Activated CD8-positive, alpha-beta memory T cell treated with anti-CD3 and anti-CD28 coated beads, Interleukin-2, amount 10 ng/mL, durations not matched to agents 7 days and 5 days (primary cell): ENCODE measurements at regions of chr1 and their contacts with region 1.

Region 1: DNA sequence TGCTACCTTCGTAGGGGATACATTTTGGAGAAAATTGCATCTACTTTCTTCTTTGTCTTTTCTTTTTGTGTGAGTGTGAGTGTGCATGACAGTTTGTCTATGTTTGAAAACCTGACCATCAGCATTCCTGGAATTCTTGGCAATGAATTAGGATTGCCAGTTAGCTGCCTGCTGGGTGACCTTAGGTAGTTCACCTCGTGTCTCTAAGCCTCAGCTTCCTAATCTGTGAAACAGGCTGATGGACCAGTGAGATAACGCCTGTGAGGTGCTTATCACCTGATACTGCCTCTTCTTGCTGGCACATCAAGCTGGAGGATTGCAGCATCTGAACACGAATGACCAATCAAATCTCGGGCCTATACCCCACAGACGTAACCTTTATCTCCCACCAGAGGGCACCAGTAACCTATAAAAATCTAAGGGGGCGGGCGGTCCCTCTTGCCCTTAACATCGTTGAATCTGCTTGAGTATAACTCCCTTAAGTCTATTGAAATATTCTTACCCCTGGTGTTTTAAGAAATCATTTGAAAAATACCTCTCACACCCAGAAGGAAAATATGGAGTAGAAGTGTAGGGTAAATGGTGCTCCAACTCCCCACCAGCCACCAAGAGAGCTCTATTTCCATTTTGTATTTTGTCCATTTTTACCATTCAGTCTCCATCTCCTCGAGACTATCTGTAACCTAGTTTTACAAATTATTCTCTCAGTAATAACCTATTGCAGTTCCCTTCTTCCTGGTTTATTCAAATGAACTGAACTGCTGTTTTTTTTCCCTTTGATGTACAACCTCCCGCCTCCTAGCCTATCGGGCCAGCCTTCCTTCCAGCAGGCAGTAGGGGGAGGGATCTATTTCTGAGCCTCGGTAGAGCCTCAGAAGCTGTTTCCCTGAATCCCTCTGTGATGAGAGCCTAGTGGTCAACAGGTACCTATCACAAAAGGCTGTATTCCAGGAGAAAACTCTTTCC is 49.7 kb downstream of the MDM4 start:
- DNase-seq: peak; percentile 80
- ATAC-seq: peak; percentile 86
- H3K4me3 Mint-ChIP-seq: no peak overlapping the region
- H3K27ac Mint-ChIP-seq: peak overlapping the region; percentile 72
- H3K4me1 Mint-ChIP-seq: peaks cover 48% of the 10 kb centered on the region
- H3K27me3 Mint-ChIP-seq: no peaks in the 10 kb centered on the region

Region 2: DNA sequence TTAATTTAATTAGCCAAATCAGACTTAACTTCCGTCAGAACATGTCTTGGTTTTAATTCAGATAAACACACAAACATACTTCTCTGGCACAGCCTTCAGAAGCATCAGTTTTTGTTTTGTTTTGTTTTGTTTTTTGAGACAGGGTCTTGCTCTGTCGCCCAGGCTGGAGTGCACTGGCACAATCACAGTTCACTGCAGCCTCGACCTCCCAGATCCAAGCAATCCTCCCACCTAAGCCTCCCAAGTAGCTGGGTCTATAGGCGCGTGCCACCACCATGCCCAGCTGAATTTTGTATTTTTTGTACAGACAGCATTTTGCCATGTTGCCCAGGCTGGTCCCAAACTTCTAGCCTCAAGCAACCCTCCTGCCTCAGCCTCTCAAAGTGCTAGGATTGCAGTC is 15.0 kb before region 1 on chr1:
- CTCF ChIA-PET with region 1: interaction called, 18 read pairs
- DNase-seq: no peak
- ATAC-seq: no peak
- H3K4me3 Mint-ChIP-seq: no peak overlapping the region
- H3K27ac Mint-ChIP-seq: no peak overlapping the region
- H3K4me1 Mint-ChIP-seq: peaks cover 7% of the 10 kb centered on the region
- H3K27me3 Mint-ChIP-seq: no peaks in the 10 kb centered on the region

Region 3: DNA sequence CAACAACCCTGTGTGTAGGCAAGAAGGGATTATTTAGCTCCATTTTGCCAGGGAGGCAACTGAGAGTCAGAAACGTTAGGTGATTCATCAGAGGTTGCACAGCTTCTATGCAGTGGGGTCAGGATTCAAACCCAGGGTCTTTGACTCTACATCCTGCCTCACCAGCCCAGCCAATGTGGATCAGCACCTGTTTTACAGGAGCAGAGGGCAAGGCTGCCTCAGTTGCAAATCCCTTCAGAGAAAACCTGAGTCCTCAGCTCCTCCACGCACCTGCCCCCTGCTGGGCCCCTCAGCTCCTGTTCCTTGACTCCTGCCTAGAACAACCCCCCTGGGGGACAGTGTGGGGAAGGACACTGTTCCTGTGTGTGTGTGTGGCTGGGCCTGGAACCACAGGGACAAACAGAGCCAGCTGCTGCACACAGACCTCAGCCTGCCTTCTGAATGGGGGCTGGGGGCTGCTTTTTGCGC is 58.0 kb after region 1 on chr1:
- CTCF ChIA-PET with region 1: interaction called, 13 read pairs
- DNase-seq: no peak
- ATAC-seq: peak; percentile 53
- H3K4me3 Mint-ChIP-seq: no peak overlapping the region
- H3K27ac Mint-ChIP-seq: no peak overlapping the region
- H3K4me1 Mint-ChIP-seq: no peaks in the 10 kb centered on the region
- H3K27me3 Mint-ChIP-seq: peaks cover 3% of the 10 kb centered on the region

Region 4: DNA sequence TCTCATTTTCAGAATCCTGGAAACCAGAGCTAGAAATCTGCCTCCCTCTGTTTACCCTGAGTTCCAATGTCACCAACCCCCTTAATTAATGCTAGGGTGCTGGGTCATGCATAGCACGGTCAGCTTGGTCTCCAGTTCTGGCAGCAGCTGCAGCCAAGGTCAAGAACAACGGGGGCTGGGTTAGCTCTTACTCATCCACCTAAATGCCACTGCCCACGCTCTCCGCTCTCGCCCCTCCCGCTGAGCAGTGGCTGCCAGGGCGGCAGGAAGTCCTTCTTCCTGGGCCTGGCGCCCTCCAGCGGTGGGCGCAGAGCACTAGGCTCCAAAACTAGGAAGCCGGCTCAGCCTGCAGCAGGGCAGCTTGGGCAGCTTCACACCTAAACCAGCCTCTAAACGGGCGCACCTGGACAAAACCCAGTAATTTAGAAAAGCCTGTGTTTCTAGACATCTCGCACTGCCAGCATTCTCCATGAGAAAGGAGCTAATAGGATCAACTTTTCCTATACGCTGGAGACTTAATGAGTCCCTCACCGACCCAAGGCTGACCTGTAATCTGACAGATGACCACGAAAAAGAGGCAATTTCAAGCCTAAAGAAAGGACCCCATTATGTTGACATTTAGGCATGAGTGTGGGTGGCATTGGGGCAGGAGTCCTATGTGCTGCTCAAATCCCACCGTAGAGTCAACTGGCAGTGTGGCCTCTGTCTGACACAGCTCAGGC is 198.0 kb after region 1 on chr1:
- CTCF ChIA-PET with region 1: interaction called, 90 read pairs
- DNase-seq: peak; percentile 83
- ATAC-seq: peak; percentile 98
- H3K4me3 Mint-ChIP-seq: no peak overlapping the region
- H3K27ac Mint-ChIP-seq: no peak overlapping the region
- H3K4me1 Mint-ChIP-seq: peaks cover 5% of the 10 kb centered on the region
- H3K27me3 Mint-ChIP-seq: peaks cover 48% of the 10 kb centered on the region